Spleen (tissue), 13 donors: ENCODE measurements at regions of chr13 and their contacts with region 1.

Region 1: DNA sequence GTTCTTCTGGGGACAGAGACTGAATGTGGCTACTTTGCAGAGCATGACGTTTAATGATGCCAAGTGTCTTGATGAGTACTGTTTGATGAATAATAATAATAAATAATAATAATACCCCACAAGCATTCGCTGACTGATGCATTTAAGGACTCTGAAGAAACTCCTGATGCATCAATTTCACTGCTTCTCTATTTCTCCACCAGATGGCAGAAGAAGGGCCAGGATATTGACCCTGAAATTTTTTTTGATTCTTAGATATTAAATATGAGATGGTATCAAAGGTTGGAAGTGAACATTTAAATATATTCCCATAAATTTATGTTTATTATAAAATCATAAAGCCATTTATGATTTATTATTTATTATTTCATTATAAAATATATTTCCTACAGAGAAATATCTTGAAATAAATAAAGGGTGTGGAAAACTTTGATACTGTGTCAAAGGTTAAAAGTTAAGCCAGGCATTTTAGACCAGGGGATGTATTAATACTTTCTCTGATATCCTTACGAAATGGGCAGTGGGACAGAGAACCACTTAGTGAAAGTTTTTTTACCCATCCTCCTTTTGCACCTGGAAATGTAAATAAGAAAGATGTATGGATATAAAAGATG is 170.9 kb downstream of the LACC1 start:
- DNase-seq: no peak
- H3K4me3 ChIP-seq: no peak overlapping the region
- H3K27ac ChIP-seq: no peak overlapping the region
- H3K4me1 ChIP-seq: peaks cover 0 to 6% (median 0%) of the 10 kb centered on the region in 6 donors
- H3K27me3 ChIP-seq: peaks cover 0 to 10% (median 0%) of the 10 kb centered on the region in 7 donors
- CTCF ChIP-seq: peak; percentile 41 to 80 (median 69)
- POLR2A ChIP-seq: no peak

Region 2: DNA sequence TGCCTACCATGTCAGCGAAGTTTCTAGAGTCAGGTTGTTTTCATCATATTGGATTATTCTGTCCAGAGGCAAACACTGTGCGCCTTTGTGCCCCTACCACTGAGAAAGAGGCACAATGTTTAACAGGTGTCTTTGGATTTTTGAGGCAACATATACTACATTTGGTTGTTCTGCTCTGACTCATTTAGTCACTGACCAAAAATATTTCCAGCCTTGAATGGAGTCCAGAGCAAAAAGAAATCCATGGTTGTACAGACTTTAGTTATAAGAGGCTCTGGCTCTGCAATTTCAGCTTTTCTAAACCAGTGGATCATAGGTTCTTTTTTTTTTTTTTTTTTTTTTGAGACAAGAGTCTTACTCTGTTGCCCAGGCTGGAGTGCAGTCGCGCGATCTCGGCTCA is 135.1 kb before region 1 on chr13:
- intact Hi-C with region 1: loop called (anchors 10 kb)
- DNase-seq: no peak
- H3K4me3 ChIP-seq: no peak overlapping the region
- H3K27ac ChIP-seq: no peak overlapping the region
- H3K4me1 ChIP-seq: peaks cover 0 to 8% (median 0%) of the 10 kb centered on the region in 6 donors
- H3K27me3 ChIP-seq: peaks cover 0 to 7% (median 0%) of the 10 kb centered on the region in 7 donors
- CTCF ChIP-seq: no peak
- POLR2A ChIP-seq: no peak